ENCODE measurements at regions of chr1 and their contacts with region 1.

Region 1: GRCh38 chr1:204746838-204747442 is 61.4 kb upstream of the LRRN2 start:
- DNase-seq: peak; percentile 79
- H3K4me3 Mint-ChIP-seq: no peak overlapping the region
- H3K27ac Mint-ChIP-seq: no peak overlapping the region
- H3K4me1 Mint-ChIP-seq: no peaks in the 10 kb centered on the region
- H3K27me3 Mint-ChIP-seq: peaks cover 48% of the 10 kb centered on the region
- CTCF ChIP-seq: peak; percentile 99

Region 2: DNA sequence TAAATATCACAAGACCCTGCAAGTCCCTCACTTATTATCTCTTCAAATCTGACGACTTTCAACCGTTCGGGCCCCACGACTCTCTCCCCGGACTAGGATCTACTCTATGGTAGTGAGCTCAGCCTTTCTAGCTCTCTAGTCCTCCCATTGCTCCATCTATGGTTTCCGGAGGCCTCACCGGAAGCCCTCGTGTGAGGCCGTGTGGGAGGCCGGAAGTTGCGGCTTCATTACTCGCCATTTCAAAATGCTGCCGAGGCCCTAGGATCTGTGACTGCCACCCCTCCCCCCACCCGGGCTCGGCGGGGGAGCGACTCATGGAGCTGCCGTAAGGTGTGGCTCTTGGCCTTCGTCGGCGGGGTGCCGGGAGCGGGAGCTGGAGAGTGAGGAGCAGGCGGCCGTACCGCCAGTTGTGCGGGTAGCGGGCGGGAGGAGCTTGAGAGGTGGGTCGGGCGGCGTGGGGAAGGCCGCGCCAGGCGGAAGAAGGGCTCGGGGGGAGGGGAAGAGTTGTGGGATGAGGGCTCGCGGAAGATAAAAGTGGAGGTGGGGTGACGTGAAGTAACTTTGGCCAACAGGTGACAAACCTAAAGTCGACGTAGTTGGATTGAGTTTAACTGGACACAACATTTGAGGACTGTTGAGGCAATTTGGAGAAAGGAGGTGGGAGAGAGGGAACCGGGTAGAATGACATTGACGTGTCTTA is 230.6 kb before region 1 on chr1 and contains the start of gene MDM4:
- CTCF ChIA-PET with region 1: no interaction called
- POLR2A ChIA-PET with region 1: no interaction called
- intact Hi-C with region 1: no loop called
- DNase-seq: peak; percentile 100
- H3K4me3 Mint-ChIP-seq: no peak within 1 kb of the TSS
- H3K27ac Mint-ChIP-seq: no peak within 1 kb of the TSS
- H3K4me1 Mint-ChIP-seq: peaks cover 12% of the 10 kb centered on the region
- H3K27me3 Mint-ChIP-seq: no peaks in the 10 kb centered on the region
- CTCF ChIP-seq: no peak
- total RNA-seq, gene MDM4: 162 and 174 TPM in 2 replicates

Region 3: DNA sequence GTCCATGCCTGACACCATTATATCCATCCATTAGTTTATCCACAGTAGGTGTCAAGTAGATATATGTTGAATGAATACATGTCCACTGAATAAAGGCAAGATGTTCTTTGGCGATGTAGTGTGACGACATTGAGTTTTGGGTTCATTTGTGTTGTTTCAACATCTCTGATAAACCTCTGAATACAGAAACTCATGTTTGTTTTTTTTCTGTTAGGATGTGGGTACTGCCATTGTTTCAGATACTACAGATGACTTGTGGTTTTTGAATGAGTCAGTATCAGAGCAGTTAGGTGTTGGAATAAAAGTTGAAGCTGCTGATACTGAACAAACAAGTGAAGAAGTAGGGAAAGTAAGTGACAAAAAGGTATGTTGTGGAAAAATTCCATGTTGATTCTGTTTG is 202.6 kb before region 1 on chr1:
- CTCF ChIA-PET with region 1: no interaction called
- POLR2A ChIA-PET with region 1: no interaction called
- intact Hi-C with region 1: no loop called
- DNase-seq: peak; percentile 70
- H3K4me3 Mint-ChIP-seq: no peak overlapping the region
- H3K27ac Mint-ChIP-seq: peak overlapping the region; percentile 21
- H3K4me1 Mint-ChIP-seq: peaks cover 24% of the 10 kb centered on the region
- H3K27me3 Mint-ChIP-seq: no peaks in the 10 kb centered on the region
- CTCF ChIP-seq: no peak

Region 4: GRCh38 chr1:204706838-204707509 is 40.0 kb before region 1 on chr1:
- CTCF ChIA-PET with region 1: interaction called, 11 read pairs
- POLR2A ChIA-PET with region 1: no interaction called
- intact Hi-C with region 1: no loop called
- DNase-seq: no peak
- H3K4me3 Mint-ChIP-seq: no peak overlapping the region
- H3K27ac Mint-ChIP-seq: peak overlapping the region; percentile 1
- H3K4me1 Mint-ChIP-seq: peaks cover 19% of the 10 kb centered on the region
- H3K27me3 Mint-ChIP-seq: peaks cover 15% of the 10 kb centered on the region
- CTCF ChIP-seq: no peak

Region 5: GRCh38 chr1:204730826-204731459 is 16.0 kb before region 1 on chr1:
- CTCF ChIA-PET with region 1: interaction called, 23 read pairs
- POLR2A ChIA-PET with region 1: interaction called, 5 read pairs
- intact Hi-C with region 1: no loop called
- DNase-seq: peak; percentile 47
- H3K4me3 Mint-ChIP-seq: no peak overlapping the region
- H3K27ac Mint-ChIP-seq: no peak overlapping the region
- H3K4me1 Mint-ChIP-seq: peaks cover 17% of the 10 kb centered on the region
- H3K27me3 Mint-ChIP-seq: peaks cover 40% of the 10 kb centered on the region
- CTCF ChIP-seq: no peak

Region 6: GRCh38 chr1:204763706-204764427 is 16.9 kb after region 1 on chr1:
- CTCF ChIA-PET with region 1: interaction called, 104 read pairs
- POLR2A ChIA-PET with region 1: interaction called, 7 read pairs
- intact Hi-C with region 1: no loop called
- DNase-seq: peak; percentile 94
- H3K4me3 Mint-ChIP-seq: no peak overlapping the region
- H3K27ac Mint-ChIP-seq: no peak overlapping the region
- H3K4me1 Mint-ChIP-seq: peaks cover 11% of the 10 kb centered on the region
- H3K27me3 Mint-ChIP-seq: peaks cover 57% of the 10 kb centered on the region
- CTCF ChIP-seq: peak; percentile 98

Region 7: DNA sequence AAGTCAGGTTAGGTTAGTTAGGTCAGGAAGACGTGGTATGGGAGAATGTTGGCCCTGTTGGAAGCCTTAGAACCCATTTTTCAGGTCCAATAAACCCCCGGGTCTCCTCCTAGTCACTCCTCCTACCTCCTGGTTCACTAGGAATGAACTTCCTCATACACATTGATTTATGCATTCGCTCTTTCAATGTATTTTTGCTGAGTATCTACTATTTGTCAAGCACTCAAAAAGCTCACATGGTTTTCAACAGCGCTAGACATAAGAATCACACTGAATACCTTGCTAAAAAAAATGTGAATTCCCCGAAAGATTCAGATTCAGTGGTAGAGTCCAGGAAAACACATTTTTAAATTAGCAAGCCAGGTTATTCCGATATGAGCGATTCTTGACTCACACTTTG is 24.4 kb after region 1 on chr1:
- CTCF ChIA-PET with region 1: interaction called, 16 read pairs
- POLR2A ChIA-PET with region 1: no interaction called
- intact Hi-C with region 1: no loop called
- DNase-seq: no peak
- H3K4me3 Mint-ChIP-seq: no peak overlapping the region
- H3K27ac Mint-ChIP-seq: no peak overlapping the region
- H3K4me1 Mint-ChIP-seq: no peaks in the 10 kb centered on the region
- H3K27me3 Mint-ChIP-seq: peaks cover 97% of the 10 kb centered on the region
- CTCF ChIP-seq: no peak

Region 8: DNA sequence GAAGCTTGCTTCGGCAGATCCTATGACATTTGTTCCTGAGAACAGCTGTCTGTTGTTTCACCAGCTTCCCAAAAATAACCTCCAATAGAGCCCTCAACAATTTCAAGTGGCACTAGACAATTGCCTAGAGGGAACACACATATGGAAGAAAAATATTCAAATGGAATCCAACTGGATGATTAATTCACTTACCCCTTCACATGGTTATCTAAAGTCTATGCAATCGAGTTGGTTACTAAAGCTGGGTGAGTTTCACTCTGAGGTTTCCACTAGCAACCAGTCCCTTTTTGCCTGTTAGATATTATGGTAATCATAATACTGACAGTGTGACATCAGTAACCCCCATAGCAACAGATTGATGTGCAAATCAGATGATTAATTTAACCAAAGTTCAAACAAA is 674.9 kb after region 1 on chr1 and contains the start of gene LEMD1:
- CTCF ChIA-PET with region 1: no interaction called
- POLR2A ChIA-PET with region 1: no interaction called
- intact Hi-C with region 1: no loop called
- DNase-seq: no peak
- H3K4me3 Mint-ChIP-seq: no peak within 1 kb of the TSS
- H3K27ac Mint-ChIP-seq: no peak within 1 kb of the TSS
- H3K4me1 Mint-ChIP-seq: no peaks in the 10 kb centered on the region
- H3K27me3 Mint-ChIP-seq: peaks cover 66% of the 10 kb centered on the region
- CTCF ChIP-seq: no peak
- total RNA-seq, gene LEMD1: 1.4 TPM in 2 replicates